CD8-positive, alpha-beta T cell (primary cell): ENCODE measurements at regions of chr7 and their contacts with region 1.

Region 1: GRCh38 chr7:138459413-138460175 is 465 bp upstream of the TRIM24 start:
- DNase-seq: peak; percentile 95 to 99 (median 97)
- ATAC-seq: peak; percentile 85
- H3K4me3 ChIP-seq: peak overlapping the region; percentile 18 to 42
- H3K4me3 Mint-ChIP-seq: peak overlapping the region; percentile 96
- H3K27ac ChIP-seq: peak overlapping the region in 1 of 2 experiments; percentile 2
- H3K27ac Mint-ChIP-seq: peak overlapping the region; percentile 86
- H3K4me1 ChIP-seq: peaks cover 14% of the 10 kb centered on the region
- H3K4me1 Mint-ChIP-seq: peaks cover 28% of the 10 kb centered on the region
- H3K27me3 ChIP-seq: no peaks in the 10 kb centered on the region
- H3K27me3 Mint-ChIP-seq: no peaks in the 10 kb centered on the region
- CTCF ChIP-seq: no peak

Region 2: DNA sequence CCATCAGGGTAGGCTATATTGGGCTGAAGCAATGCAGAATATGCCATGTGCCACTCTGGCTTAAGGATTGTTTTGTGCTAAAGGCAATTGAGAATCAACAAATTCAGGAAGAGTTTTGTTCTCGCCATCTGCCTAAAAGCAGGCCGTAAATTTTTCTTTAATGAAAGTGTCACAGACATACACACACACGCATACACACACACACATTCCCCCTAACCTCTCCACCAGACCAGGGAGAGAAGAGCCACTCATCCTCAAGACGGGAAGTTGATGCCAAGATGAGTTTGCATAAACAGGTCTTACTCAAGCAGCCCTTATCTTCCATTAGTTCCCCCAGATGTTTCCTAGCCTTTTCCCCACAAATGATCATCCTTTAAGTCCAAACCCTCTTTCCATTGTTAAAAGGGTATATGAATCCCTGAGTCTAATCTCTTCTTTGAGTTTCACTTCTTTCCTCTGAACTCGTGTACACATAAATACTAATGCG is 59.2 kb before region 1 on chr7:
- CTCF ChIA-PET with region 1: no interaction called
- POLR2A ChIA-PET with region 1: no interaction called
- intact Hi-C with region 1: no loop called
- DNase-seq: no peak
- ATAC-seq: no peak
- H3K4me3 ChIP-seq: no peak overlapping the region
- H3K4me3 Mint-ChIP-seq: no peak overlapping the region
- H3K27ac ChIP-seq: no peak overlapping the region
- H3K27ac Mint-ChIP-seq: no peak overlapping the region
- H3K4me1 ChIP-seq: no peaks in the 10 kb centered on the region
- H3K4me1 Mint-ChIP-seq: no peaks in the 10 kb centered on the region
- H3K27me3 ChIP-seq: no peaks in the 10 kb centered on the region
- H3K27me3 Mint-ChIP-seq: no peaks in the 10 kb centered on the region
- CTCF ChIP-seq: no peak

Region 3: GRCh38 chr7:138625849-138626230 is 166.2 kb after region 1 on chr7:
- CTCF ChIA-PET with region 1: no interaction called
- POLR2A ChIA-PET with region 1: interaction called, 3 read pairs
- intact Hi-C with region 1: loop called in 1 of 2 experiments (anchors 1 kb)
- DNase-seq: peak in 7 of 9 experiments; percentile 3 to 50 (median 16)
- ATAC-seq: peak; percentile 62
- H3K4me3 ChIP-seq: peak overlapping the region in 1 of 2 experiments; percentile 7
- H3K4me3 Mint-ChIP-seq: peak overlapping the region; percentile 63
- H3K27ac ChIP-seq: peak overlapping the region in 1 of 2 experiments; percentile 61
- H3K27ac Mint-ChIP-seq: peak overlapping the region; percentile 69
- H3K4me1 ChIP-seq: peaks cover 45% of the 10 kb centered on the region
- H3K4me1 Mint-ChIP-seq: peaks cover 45% of the 10 kb centered on the region
- H3K27me3 ChIP-seq: peaks cover 0 to 2% of the 10 kb centered on the region in 2 experiments
- H3K27me3 Mint-ChIP-seq: no peaks in the 10 kb centered on the region
- CTCF ChIP-seq: no peak

Region 4: GRCh38 chr7:139109188-139109982 is 649.8 kb after region 1 on chr7 and contains the start of gene ZC3HAV1:
- CTCF ChIA-PET with region 1: no interaction called
- POLR2A ChIA-PET with region 1: no interaction called
- intact Hi-C with region 1: loop called in 1 of 2 experiments (anchors 10 kb)
- DNase-seq: peak; percentile 78 to 97 (median 89)
- ATAC-seq: peak; percentile 87
- H3K4me3 ChIP-seq: peak within 1 kb of the TSS; percentile 81 to 99
- H3K4me3 Mint-ChIP-seq: peak within 1 kb of the TSS; percentile 96
- H3K27ac ChIP-seq: peak within 1 kb of the TSS; percentile 97 to 98
- H3K27ac Mint-ChIP-seq: peak within 1 kb of the TSS; percentile 99
- H3K4me1 ChIP-seq: peaks cover 18% of the 10 kb centered on the region
- H3K4me1 Mint-ChIP-seq: peaks cover 42% of the 10 kb centered on the region
- H3K27me3 ChIP-seq: no peaks in the 10 kb centered on the region
- H3K27me3 Mint-ChIP-seq: no peaks in the 10 kb centered on the region
- CTCF ChIP-seq: no peak
- total RNA-seq, gene ZC3HAV1: 194 to 198 TPM

Region 5: DNA sequence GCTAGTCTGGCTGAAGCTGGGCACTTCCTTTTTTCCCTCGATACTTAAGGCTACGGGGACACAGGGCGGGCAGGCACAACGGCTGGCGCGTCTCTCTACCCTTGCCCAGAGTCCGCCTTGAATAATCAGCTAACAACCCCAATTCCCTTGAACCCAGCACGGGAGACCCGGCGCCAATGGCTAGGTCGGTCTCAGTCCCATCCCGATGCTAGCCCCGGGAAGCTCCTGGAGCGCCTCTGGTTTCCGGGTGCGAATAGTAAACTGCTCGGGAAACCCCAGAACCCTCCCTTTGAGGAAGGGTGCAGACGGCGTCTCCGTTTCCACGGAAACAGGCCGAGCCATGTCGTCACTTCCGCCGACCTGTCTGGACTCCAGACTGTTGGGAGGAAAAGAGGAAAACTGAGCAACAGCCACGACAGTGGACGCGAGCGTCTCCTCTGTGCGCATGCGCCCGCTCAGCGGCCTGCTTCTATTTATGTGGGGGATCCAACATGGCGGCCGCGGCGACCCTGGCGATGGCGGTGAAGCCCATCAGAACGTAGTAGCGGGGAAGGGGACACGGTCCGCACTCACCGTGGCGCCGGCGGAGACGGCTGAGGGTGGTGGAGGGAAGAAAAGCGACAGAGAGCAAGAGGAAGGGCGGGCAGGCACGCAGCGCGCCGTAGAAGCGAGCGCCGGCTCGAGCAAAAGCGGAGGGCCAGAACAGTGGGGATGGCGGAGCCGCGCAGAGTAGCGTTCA is 771.3 kb after region 1 on chr7 and contains the start of gene UBN2:
- CTCF ChIA-PET with region 1: no interaction called
- POLR2A ChIA-PET with region 1: no interaction called
- intact Hi-C with region 1: loop called (anchors 5 kb)
- DNase-seq: peak; percentile 65 to 96 (median 89)
- ATAC-seq: peak; percentile 72
- H3K4me3 ChIP-seq: peak within 1 kb of the TSS; percentile 73 to 86
- H3K4me3 Mint-ChIP-seq: peak within 1 kb of the TSS; percentile 99
- H3K27ac ChIP-seq: peak within 1 kb of the TSS; percentile 68 to 81
- H3K27ac Mint-ChIP-seq: peak within 1 kb of the TSS; percentile 97
- H3K4me1 ChIP-seq: peaks cover 20% of the 10 kb centered on the region
- H3K4me1 Mint-ChIP-seq: peaks cover 33% of the 10 kb centered on the region
- H3K27me3 ChIP-seq: no peaks in the 10 kb centered on the region
- H3K27me3 Mint-ChIP-seq: peaks cover 5% of the 10 kb centered on the region
- CTCF ChIP-seq: no peak
- total RNA-seq, gene UBN2: 12.2 to 13.0 TPM

Region 6: GRCh38 chr7:139340037-139340807 is 880.6 kb after region 1 on chr7:
- CTCF ChIA-PET with region 1: no interaction called
- POLR2A ChIA-PET with region 1: no interaction called
- intact Hi-C with region 1: loop called (anchors 2 to 10 kb)
- DNase-seq: peak; percentile 95 to 100 (median 97)
- ATAC-seq: peak; percentile 80
- H3K4me3 ChIP-seq: peak overlapping the region; percentile 69 to 85
- H3K4me3 Mint-ChIP-seq: peak overlapping the region; percentile 98
- H3K27ac ChIP-seq: peak overlapping the region; percentile 94 to 98
- H3K27ac Mint-ChIP-seq: peak overlapping the region; percentile 100
- H3K4me1 ChIP-seq: peaks cover 13% of the 10 kb centered on the region
- H3K4me1 Mint-ChIP-seq: peaks cover 32% of the 10 kb centered on the region
- H3K27me3 ChIP-seq: no peaks in the 10 kb centered on the region
- H3K27me3 Mint-ChIP-seq: peaks cover 2% of the 10 kb centered on the region
- CTCF ChIP-seq: peak; percentile 36